MCF 10A (cell line): ENCODE measurements at regions of chr2 and their contacts with region 1.

Region 1: DNA sequence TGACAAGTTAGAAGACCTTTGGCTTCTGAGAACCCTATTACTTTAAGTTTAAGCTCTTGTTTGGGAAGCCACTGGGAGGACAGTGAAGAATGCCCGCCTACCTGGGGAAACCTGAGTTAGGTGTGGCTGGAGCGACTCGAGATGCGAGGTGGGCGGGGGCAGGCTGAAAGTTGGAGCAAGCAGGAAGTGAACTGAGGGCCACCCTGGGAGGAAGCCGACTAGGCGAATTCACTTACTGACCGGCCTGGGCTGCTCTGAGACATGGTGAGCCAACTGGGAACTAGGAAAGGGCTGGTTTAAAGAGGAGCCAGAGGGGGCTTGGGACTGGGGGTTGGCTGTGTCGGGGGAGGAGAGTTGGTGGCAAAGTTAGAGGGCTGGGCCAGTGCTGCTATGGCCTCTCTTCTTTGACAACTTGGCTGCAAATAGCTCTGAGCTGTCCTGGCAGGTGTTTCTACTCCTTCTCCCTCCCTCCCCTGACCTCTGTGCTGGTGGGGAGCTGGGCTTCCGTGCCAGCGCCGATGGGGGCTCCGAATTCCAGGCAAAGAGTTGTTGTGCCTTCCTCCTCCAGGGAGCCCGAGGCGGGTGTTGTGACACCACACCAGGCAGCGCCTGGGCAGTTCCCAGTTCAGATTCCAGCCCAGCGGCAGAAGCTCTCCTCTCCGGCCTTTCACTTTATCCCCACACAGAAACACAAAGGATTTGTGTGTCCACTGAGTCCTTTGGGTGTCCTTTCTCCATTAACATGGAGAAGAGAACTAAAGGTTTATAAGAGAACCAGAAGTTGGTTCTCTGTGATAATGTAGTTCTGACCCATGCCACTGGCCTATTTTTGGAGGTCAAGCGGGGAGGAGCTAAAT is at the start of gene VAMP8:
- DNase-seq: peak; percentile 80
- H3K4me3 Mint-ChIP-seq: peak within 1 kb of the TSS; percentile 79
- H3K27ac Mint-ChIP-seq: peak within 1 kb of the TSS; percentile 94
- H3K4me1 Mint-ChIP-seq: peaks cover 11% of the 10 kb centered on the region
- H3K27me3 Mint-ChIP-seq: no peaks in the 10 kb centered on the region
- CTCF ChIP-seq: no peak
- total RNA-seq, gene VAMP8: 49.9 and 56.0 TPM in 2 replicates

Region 2: DNA sequence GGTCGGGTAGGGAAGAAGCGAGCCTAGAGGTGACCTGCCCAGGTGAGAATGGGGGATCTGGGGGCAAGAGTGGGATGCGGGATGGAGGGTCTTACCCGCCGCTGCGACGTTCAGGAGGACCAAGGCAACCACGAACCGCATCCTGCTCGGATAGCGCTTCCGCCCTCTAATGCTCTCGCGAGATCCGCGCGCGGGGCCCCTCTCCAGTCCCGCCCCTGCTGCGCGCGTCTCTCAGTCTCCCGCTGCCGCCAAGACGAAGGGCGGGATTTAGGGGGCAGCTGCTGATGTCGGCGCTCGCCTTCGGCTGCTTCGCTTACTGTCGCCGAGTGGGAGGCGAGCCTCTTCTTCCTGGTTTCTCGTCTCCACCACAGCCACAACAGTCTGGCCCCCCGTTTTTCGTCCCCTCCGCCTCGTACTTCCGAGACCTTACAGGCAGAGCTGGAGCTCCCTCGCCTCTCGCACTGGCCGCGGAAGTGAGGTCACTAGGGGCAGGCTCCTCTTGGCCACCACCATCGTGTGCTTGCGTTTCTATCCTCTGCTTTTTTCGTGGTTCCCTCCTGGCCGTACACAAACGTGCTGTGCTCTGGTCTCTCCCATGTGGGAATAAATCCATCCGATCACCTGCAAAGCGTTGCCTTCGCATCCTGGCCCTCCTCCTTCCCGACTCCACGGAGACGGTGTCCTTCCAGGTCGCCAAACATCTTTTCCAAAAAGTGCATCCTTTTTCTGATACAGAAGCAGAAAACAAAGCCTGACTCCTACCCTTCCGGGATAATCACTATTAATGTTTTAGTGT is 249.6 kb before region 1 on chr2 and contains the start of gene TGOLN2:
- CTCF ChIA-PET with region 1: no interaction called
- POLR2A ChIA-PET with region 1: interaction called, 13 read pairs
- intact Hi-C with region 1: no loop called
- DNase-seq: peak; percentile 92
- H3K4me3 Mint-ChIP-seq: peak within 1 kb of the TSS; percentile 82
- H3K27ac Mint-ChIP-seq: peak within 1 kb of the TSS; percentile 94
- H3K4me1 Mint-ChIP-seq: peaks cover 16% of the 10 kb centered on the region
- H3K27me3 Mint-ChIP-seq: no peaks in the 10 kb centered on the region
- CTCF ChIP-seq: no peak
- total RNA-seq, gene TGOLN2: 62.9 and 65.5 TPM in 2 replicates

Region 3: GRCh38 chr2:85409845-85410583 is 167.6 kb before region 1 on chr2 and contains the start of gene CAPG:
- CTCF ChIA-PET with region 1: no interaction called
- POLR2A ChIA-PET with region 1: interaction called, 14 read pairs
- intact Hi-C with region 1: no loop called
- DNase-seq: peak; percentile 73
- H3K4me3 Mint-ChIP-seq: peak within 1 kb of the TSS; percentile 70
- H3K27ac Mint-ChIP-seq: peak within 1 kb of the TSS; percentile 83
- H3K4me1 Mint-ChIP-seq: peaks cover 34% of the 10 kb centered on the region
- H3K27me3 Mint-ChIP-seq: no peaks in the 10 kb centered on the region
- CTCF ChIP-seq: no peak
- total RNA-seq, gene CAPG: 173 and 188 TPM in 2 replicates

Region 4: DNA sequence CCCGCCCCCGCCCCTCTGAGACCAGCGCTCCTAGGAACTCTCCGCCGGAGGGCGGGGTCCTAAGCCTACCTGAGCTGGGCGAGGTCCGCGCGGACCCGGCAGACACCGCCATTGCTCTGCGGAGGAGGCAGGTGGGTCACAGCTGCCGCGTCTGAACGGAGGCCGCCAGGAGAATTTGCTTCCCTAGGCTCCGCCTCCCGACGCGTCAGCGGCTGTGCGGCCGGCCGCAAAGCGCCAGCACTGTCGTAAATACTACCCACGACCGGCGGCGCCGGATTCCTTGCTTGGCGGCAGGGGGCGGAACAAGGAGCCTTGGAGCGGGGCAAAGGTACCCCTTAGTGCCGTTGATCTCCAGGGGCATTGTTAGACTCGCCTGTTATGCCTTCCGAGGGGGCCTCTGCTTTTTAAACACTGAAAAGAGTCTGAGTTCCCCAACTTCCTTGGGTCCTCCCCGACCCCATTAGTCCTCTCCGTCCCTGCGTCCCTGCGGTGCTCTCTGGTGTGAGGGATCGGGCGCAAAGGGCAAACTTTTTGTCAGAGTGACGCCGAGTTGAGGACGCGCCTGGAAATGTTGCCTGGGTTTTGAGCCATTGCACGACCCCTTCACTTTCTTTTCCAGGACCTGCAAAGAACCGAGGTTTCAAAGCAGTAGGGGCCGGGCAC is 16.2 kb before region 1 on chr2 and contains the start of gene GGCX:
- CTCF ChIA-PET with region 1: interaction called, 3 read pairs
- POLR2A ChIA-PET with region 1: interaction called, 36 read pairs
- intact Hi-C with region 1: no loop called
- DNase-seq: peak; percentile 93
- H3K4me3 Mint-ChIP-seq: peak within 1 kb of the TSS; percentile 97
- H3K27ac Mint-ChIP-seq: peak within 1 kb of the TSS; percentile 93
- H3K4me1 Mint-ChIP-seq: peaks cover 6% of the 10 kb centered on the region
- H3K27me3 Mint-ChIP-seq: no peaks in the 10 kb centered on the region
- CTCF ChIP-seq: no peak
- total RNA-seq, gene GGCX: 49.1 and 52.2 TPM in 2 replicates

Region 5: DNA sequence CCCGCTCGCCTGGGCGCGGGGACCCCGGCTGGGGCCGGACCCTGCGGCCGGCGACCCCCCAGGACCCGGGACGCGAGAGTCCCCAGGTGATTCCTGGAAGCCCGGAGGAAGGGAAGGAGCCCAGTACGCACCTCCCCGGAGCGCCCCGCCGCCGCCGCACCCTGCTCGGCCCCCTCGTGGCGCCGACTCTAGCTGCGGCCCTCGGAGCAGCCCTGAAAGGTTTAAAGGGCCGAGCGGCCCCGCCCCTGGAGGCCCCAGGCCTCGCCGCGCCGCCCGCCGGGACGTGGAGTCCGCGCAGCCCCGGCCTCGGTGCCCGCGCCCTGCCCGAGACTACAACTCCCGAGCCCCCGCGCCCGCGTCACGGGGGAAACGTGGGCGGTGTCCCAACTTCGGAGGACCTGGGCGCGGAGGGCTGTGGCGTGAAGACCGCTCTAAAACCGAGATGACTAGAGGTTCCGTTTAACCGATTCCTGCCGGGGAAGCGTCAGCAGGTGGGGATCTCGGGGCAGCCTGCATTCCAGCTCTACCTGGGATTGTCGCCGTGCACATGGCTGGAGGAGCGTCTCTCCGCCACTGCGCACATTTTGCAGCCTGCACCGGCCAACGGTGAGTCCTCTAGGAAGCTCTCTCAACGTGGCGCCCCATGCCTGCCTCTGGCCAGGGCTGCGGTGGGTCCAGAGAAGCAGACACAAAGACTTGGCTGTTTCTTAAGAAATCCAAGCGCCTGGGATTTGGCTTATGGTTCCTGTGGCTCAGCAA is 25.0 kb after region 1 on chr2 and contains the start of gene TMEM150A:
- CTCF ChIA-PET with region 1: no interaction called
- POLR2A ChIA-PET with region 1: interaction called, 113 read pairs
- intact Hi-C with region 1: no loop called
- DNase-seq: peak; percentile 90
- H3K4me3 Mint-ChIP-seq: peak within 1 kb of the TSS; percentile 79
- H3K27ac Mint-ChIP-seq: peak within 1 kb of the TSS; percentile 70
- H3K4me1 Mint-ChIP-seq: peaks cover 12% of the 10 kb centered on the region
- H3K27me3 Mint-ChIP-seq: no peaks in the 10 kb centered on the region
- CTCF ChIP-seq: peak; percentile 30
- total RNA-seq, gene TMEM150A: 12.5 and 14.5 TPM in 2 replicates

Region 6: GRCh38 chr2:85611705-85612587 is 34.3 kb after region 1 on chr2 and contains the start of gene C2orf68:
- CTCF ChIA-PET with region 1: no interaction called
- POLR2A ChIA-PET with region 1: interaction called, 34 read pairs
- intact Hi-C with region 1: no loop called
- DNase-seq: peak; percentile 83
- H3K4me3 Mint-ChIP-seq: peak within 1 kb of the TSS; percentile 83
- H3K27ac Mint-ChIP-seq: peak within 1 kb of the TSS; percentile 68
- H3K4me1 Mint-ChIP-seq: peaks cover 4% of the 10 kb centered on the region
- H3K27me3 Mint-ChIP-seq: no peaks in the 10 kb centered on the region
- CTCF ChIP-seq: no peak
- total RNA-seq, gene C2orf68: 34.3 and 35.5 TPM in 2 replicates

Region 7: DNA sequence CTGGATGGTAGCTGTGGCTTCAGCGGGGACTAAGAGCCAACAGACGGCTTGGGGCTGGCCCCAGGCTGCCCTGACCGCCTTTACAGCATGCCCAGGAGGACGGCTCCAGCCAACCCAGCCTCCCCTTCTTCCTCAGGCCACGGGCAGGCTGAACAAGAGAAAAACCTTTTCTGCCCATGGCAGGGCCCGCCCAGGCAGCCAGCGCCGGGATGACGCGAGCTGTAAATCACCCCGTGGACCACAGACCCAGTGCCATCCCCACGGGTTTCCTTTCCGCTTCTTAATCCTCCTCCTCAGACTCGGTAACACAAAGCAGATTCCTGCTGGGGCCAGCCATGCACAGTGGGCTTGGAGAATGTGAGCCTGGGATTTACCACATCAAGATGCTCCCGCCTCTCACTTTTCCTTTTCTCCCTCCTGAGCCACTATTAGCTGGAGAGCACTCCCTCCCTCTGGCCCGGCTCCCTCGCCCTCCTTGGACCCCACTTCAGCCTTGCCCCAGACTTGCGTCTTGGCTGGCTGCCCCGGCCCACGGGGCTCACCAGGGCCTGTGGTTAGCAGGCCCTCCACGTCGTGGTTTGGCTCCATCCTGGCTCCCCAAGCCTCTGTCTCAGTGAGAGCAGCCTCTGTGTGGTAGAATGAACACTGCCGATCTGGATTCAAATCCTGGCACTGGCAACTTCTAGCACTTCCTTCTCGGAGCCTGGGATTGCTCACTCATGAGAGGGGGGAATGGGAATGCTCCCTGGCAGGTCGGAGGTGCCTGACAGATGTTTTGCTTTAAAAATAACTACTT is 207.6 kb after region 1 on chr2:
- CTCF ChIA-PET with region 1: no interaction called
- POLR2A ChIA-PET with region 1: no interaction called
- intact Hi-C with region 1: no loop called
- DNase-seq: no peak
- H3K4me3 Mint-ChIP-seq: no peak overlapping the region
- H3K27ac Mint-ChIP-seq: no peak overlapping the region
- H3K4me1 Mint-ChIP-seq: no peaks in the 10 kb centered on the region
- H3K27me3 Mint-ChIP-seq: peaks cover 17% of the 10 kb centered on the region
- CTCF ChIP-seq: no peak

Region 8: DNA sequence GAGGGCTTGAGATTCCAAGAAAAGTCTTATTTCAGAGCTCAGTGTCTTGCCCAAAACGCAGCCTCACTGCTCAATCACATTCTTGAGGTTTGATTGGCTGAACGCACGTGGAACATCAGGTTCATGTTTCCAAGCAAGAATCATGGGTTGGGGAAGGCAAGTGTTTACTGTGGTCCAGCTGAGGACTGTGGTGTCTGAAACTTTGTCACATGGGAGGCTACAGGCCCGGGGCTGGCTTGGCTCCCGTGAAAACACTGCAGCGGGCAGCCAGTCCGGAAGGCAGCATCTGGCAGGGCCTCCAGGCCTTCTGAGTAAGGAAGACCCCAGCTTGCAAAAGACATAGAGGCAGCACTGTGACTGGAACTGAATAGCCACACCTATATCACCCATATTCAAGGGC is 443.4 kb after region 1 on chr2:
- CTCF ChIA-PET with region 1: no interaction called
- POLR2A ChIA-PET with region 1: no interaction called
- intact Hi-C with region 1: no loop called
- DNase-seq: no peak
- H3K4me3 Mint-ChIP-seq: no peak overlapping the region
- H3K27ac Mint-ChIP-seq: no peak overlapping the region
- H3K4me1 Mint-ChIP-seq: peaks cover 15% of the 10 kb centered on the region
- H3K27me3 Mint-ChIP-seq: no peaks in the 10 kb centered on the region
- CTCF ChIP-seq: no peak